CD8-positive, alpha-beta T cell (primary cell): ENCODE measurements at regions of chr10 and their contacts with region 1.

Region 1: GRCh38 chr10:119872860-119873681 is 428 bp upstream of the MCMBP start:
- DNase-seq: peak; percentile 79 to 95 (median 87)
- ATAC-seq: peak; percentile 90
- H3K4me3 ChIP-seq: peak overlapping the region; percentile 68 to 96
- H3K4me3 Mint-ChIP-seq: peak overlapping the region; percentile 88
- H3K27ac ChIP-seq: peak overlapping the region; percentile 81 to 86
- H3K27ac Mint-ChIP-seq: peak overlapping the region; percentile 87
- H3K4me1 ChIP-seq: peaks cover 22% of the 10 kb centered on the region
- H3K4me1 Mint-ChIP-seq: peaks cover 39% of the 10 kb centered on the region
- H3K27me3 ChIP-seq: no peaks in the 10 kb centered on the region
- H3K27me3 Mint-ChIP-seq: no peaks in the 10 kb centered on the region
- CTCF ChIP-seq: no peak

Region 2: DNA sequence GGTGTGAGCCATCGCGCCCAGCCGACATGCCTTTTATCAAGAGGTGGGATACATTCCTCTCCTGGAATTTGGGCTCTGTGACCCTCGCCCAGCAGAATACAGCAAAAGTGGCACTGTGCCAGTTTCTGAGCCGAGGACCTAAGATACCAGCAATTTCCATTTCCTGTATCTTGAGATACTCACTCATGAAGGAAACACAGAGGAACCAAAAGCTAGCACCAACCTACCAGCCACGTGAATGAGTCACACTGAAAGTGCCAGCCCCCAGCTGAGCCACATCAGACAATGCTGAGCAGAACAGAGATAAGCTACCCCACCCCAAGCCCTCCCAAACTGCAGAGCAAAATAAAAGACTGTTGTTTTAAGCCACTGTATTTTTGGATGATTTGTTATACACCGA is 1174.7 kb before region 1 on chr10:
- CTCF ChIA-PET with region 1: no interaction called
- POLR2A ChIA-PET with region 1: no interaction called
- intact Hi-C with region 1: loop called in 1 of 2 experiments (anchors 5 kb)
- DNase-seq: peak; percentile 59 to 92 (median 82)
- ATAC-seq: peak; percentile 100
- H3K4me3 ChIP-seq: peak overlapping the region; percentile 10 to 11
- H3K4me3 Mint-ChIP-seq: peak overlapping the region; percentile 75
- H3K27ac ChIP-seq: peak overlapping the region; percentile 18 to 40
- H3K27ac Mint-ChIP-seq: peak overlapping the region; percentile 91
- H3K4me1 ChIP-seq: peaks cover 57% of the 10 kb centered on the region
- H3K4me1 Mint-ChIP-seq: peaks cover 73% of the 10 kb centered on the region
- H3K27me3 ChIP-seq: no peaks in the 10 kb centered on the region
- H3K27me3 Mint-ChIP-seq: no peaks in the 10 kb centered on the region
- CTCF ChIP-seq: no peak

Region 3: DNA sequence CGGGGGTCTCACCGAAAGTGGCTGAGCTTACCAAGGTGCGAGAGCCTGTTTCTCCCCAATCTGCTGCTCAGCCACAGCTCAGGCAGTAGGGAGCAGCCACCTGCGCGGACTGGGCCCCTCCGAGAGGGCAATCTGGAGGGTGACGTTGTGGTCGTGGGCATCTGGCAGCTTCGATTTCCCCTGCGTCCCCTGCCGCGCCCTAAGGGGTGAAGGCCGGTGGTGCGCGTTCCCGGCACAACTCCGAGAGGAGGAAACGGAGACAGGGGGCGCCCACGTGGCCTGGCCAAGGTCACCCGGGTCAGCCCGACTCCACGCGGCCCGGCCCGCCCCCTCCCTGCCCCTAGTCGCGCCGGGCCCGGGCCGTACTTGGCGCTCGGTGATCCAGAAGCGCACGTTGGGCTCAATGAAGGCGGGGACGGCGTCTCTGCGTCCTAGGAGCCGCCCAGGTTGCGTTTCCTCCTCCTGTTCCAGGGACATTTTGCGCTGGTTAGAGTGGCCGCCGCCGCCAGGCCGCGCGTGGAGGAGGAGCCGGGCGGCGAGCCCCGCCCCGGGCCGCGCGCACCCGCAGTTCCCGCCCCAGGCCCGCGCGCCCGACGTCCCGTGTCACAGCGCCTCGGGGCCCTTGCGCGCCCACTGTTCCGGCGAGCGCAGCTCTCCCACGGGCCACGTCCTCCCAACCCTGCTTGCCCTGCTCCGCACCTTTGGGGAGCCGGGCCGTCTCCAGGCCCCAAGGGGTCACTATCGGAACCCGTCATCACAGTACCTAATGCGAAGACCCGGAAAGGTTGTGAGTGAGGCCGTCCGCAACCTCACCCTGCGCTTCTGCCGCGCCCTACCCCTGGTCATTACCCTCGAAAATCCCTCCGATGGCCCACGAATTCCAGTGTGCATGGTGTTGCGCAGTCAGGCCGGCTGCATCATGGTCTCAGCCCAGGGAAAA is 707.6 kb before region 1 on chr10 and contains the start of gene SFXN4:
- CTCF ChIA-PET with region 1: no interaction called
- POLR2A ChIA-PET with region 1: no interaction called
- intact Hi-C with region 1: loop called in 1 of 2 experiments (anchors 2 kb)
- DNase-seq: peak; percentile 59 to 89 (median 77)
- ATAC-seq: peak; percentile 93
- H3K4me3 ChIP-seq: peak within 1 kb of the TSS; percentile 49 to 80
- H3K4me3 Mint-ChIP-seq: peak within 1 kb of the TSS; percentile 95
- H3K27ac ChIP-seq: peak within 1 kb of the TSS; percentile 61 to 71
- H3K27ac Mint-ChIP-seq: peak within 1 kb of the TSS; percentile 96
- H3K4me1 ChIP-seq: peaks cover 18% of the 10 kb centered on the region
- H3K4me1 Mint-ChIP-seq: peaks cover 34% of the 10 kb centered on the region
- H3K27me3 ChIP-seq: no peaks in the 10 kb centered on the region
- H3K27me3 Mint-ChIP-seq: no peaks in the 10 kb centered on the region
- CTCF ChIP-seq: no peak
- total RNA-seq, gene SFXN4: 10.5 to 10.8 TPM

Region 4: GRCh38 chr10:119178372-119179119 is 694.5 kb before region 1 on chr10 and contains the start of gene PRDX3:
- CTCF ChIA-PET with region 1: no interaction called
- POLR2A ChIA-PET with region 1: no interaction called
- intact Hi-C with region 1: loop called in 1 of 2 experiments (anchors 2 kb)
- DNase-seq: peak; percentile 85 to 94 (median 93)
- ATAC-seq: peak; percentile 99
- H3K4me3 ChIP-seq: peak within 1 kb of the TSS; percentile 85 to 93
- H3K4me3 Mint-ChIP-seq: peak within 1 kb of the TSS; percentile 89
- H3K27ac ChIP-seq: peak within 1 kb of the TSS; percentile 73 to 75
- H3K27ac Mint-ChIP-seq: peak within 1 kb of the TSS; percentile 95
- H3K4me1 ChIP-seq: peaks cover 20% of the 10 kb centered on the region
- H3K4me1 Mint-ChIP-seq: peaks cover 35% of the 10 kb centered on the region
- H3K27me3 ChIP-seq: no peaks in the 10 kb centered on the region
- H3K27me3 Mint-ChIP-seq: no peaks in the 10 kb centered on the region
- CTCF ChIP-seq: no peak
- total RNA-seq, gene PRDX3: 7.6 to 11.7 TPM

Region 5: DNA sequence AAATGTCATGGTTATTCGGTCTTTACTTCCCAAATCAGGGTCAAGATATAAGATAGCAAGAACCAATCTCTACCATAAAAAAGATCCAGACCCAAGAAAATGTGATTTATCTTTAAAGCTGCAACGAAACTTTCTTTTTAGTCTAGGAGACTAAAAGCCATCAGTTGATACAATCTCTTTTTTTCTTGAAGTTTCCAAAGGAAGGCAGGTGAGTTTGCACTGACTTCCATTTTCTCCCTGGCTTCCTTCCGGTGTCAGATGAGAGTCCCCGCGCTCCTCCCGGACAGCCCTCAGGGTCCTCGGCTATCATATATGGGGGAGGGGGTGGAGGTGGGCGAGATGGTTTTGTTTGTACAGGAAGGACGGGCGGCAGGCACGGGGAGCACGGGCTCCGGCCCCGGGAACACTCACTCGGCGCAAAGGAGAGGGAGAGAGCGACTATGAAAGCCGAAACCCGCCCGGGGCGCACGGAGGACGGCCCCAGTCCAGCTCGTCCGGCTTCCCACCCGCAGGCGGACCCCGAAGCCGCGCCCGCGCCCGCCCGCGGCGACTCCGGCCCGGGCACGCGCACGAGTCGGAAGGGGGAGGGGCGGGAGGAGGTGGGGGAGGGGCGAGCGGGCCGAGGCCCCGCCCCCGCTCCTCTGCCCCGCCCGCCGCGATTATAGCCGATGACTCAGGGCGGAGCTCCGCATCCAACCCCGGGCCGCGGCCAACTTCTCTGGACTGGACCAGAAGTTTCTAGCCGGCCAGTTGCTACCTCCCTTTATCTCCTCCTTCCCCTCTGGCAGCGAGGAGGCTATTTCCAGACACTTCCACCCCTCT is 222.2 kb before region 1 on chr10 and contains the start of gene BAG3:
- CTCF ChIA-PET with region 1: no interaction called
- POLR2A ChIA-PET with region 1: interaction called, 5 read pairs
- intact Hi-C with region 1: loop called (anchors 1 kb)
- DNase-seq: peak; percentile 57 to 88 (median 76)
- ATAC-seq: peak; percentile 76
- H3K4me3 ChIP-seq: peak within 1 kb of the TSS; percentile 94 to 95
- H3K4me3 Mint-ChIP-seq: peak within 1 kb of the TSS; percentile 98
- H3K27ac ChIP-seq: peak within 1 kb of the TSS; percentile 78 to 88
- H3K27ac Mint-ChIP-seq: peak within 1 kb of the TSS; percentile 95
- H3K4me1 ChIP-seq: peaks cover 36% of the 10 kb centered on the region
- H3K4me1 Mint-ChIP-seq: peaks cover 44% of the 10 kb centered on the region
- H3K27me3 ChIP-seq: no peaks in the 10 kb centered on the region
- H3K27me3 Mint-ChIP-seq: no peaks in the 10 kb centered on the region
- CTCF ChIP-seq: no peak
- total RNA-seq, gene BAG3: 20.6 to 21.8 TPM

Region 6: DNA sequence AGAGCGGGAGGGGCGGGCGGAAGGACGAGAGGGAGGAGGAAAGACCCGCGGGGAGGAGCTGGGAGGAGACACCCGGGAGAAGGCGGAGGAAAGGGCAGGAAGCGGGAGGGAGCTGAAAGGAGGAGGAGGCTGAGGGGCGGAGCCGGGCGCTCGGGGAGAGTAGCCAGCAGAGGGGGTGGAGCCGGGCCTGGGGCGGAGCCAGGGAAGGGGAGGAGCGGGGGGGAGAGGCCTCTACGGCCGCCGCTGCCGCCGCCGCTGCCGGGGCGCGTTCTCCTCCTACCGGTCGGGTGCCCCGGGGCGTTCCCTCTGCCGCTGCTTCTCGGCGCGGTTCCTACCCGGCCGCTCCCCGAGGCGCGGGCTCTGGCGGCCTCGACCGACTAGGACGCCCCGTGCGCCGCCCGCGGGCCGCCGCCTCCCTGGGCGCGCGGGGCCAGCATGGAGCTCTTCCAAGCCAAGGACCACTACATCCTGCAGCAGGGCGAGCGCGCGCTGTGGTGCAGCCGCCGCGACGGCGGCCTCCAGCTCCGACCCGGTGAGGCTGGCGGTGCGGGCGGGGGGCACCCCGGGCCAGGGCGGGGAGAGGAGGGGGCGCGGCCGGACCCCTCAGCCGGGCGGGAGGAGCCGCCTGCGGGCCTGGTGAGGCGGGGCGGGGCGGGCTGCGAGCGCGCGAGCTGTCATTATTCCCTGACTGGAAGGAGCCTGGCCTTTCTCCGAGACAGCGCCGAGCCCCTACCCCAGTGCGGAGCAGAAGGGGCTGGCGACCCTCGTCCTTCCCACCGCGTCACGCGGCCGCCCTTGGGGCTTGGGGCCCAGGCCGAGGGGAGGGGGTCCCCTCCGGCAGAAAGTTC is 147.0 kb before region 1 on chr10 and contains the start of gene INPP5F:
- CTCF ChIA-PET with region 1: interaction called, 3 read pairs
- POLR2A ChIA-PET with region 1: interaction called, 23 read pairs
- intact Hi-C with region 1: loop called (anchors 1 kb)
- DNase-seq: peak; percentile 95 to 100 (median 98)
- ATAC-seq: peak; percentile 95
- H3K4me3 ChIP-seq: peak within 1 kb of the TSS; percentile 64 to 81
- H3K4me3 Mint-ChIP-seq: peak within 1 kb of the TSS; percentile 90
- H3K27ac ChIP-seq: peak within 1 kb of the TSS; percentile 33 to 44
- H3K27ac Mint-ChIP-seq: peak within 1 kb of the TSS; percentile 81
- H3K4me1 ChIP-seq: peaks cover 16% of the 10 kb centered on the region
- H3K4me1 Mint-ChIP-seq: peaks cover 27% of the 10 kb centered on the region
- H3K27me3 ChIP-seq: no peaks in the 10 kb centered on the region
- H3K27me3 Mint-ChIP-seq: no peaks in the 10 kb centered on the region
- CTCF ChIP-seq: no peak
- total RNA-seq, gene INPP5F: 3.8 to 6.5 TPM

Region 7: GRCh38 chr10:119892188-119893065 is 19.4 kb after region 1 on chr10 and contains the start of gene SEC23IP:
- CTCF ChIA-PET with region 1: interaction called, 17 read pairs
- POLR2A ChIA-PET with region 1: interaction called, 51 read pairs
- intact Hi-C with region 1: loop called (anchors 1 kb)
- DNase-seq: peak; percentile 78 to 95 (median 89)
- ATAC-seq: peak; percentile 98
- H3K4me3 ChIP-seq: peak within 1 kb of the TSS; percentile 97 to 98
- H3K4me3 Mint-ChIP-seq: peak within 1 kb of the TSS; percentile 98
- H3K27ac ChIP-seq: peak within 1 kb of the TSS; percentile 84 to 96
- H3K27ac Mint-ChIP-seq: peak within 1 kb of the TSS; percentile 99
- H3K4me1 ChIP-seq: peaks cover 10% of the 10 kb centered on the region
- H3K4me1 Mint-ChIP-seq: peaks cover 46% of the 10 kb centered on the region
- H3K27me3 ChIP-seq: no peaks in the 10 kb centered on the region
- H3K27me3 Mint-ChIP-seq: no peaks in the 10 kb centered on the region
- CTCF ChIP-seq: no peak
- total RNA-seq, gene SEC23IP: 16.2 to 19.8 TPM

Region 8: GRCh38 chr10:119903946-119904666 is 31.0 kb after region 1 on chr10:
- CTCF ChIA-PET with region 1: no interaction called
- POLR2A ChIA-PET with region 1: no interaction called
- intact Hi-C with region 1: no loop called
- DNase-seq: no peak
- ATAC-seq: no peak
- H3K4me3 ChIP-seq: no peak overlapping the region
- H3K4me3 Mint-ChIP-seq: no peak overlapping the region
- H3K27ac ChIP-seq: no peak overlapping the region
- H3K27ac Mint-ChIP-seq: no peak overlapping the region
- H3K4me1 ChIP-seq: peaks cover 4% of the 10 kb centered on the region
- H3K4me1 Mint-ChIP-seq: peaks cover 8% of the 10 kb centered on the region
- H3K27me3 ChIP-seq: no peaks in the 10 kb centered on the region
- H3K27me3 Mint-ChIP-seq: no peaks in the 10 kb centered on the region
- CTCF ChIP-seq: no peak